Dorsolateral prefrontal cortex (tissue), 120 donors: ENCODE measurements at regions of chrX and their contacts with region 1.

Region 1: GRCh38 chrX:13966071-13966792 is 63.5 kb downstream of the GEMIN8 start:
- DNase-seq: no peak
- H3K4me3 ChIP-seq: peak overlapping the region in 4 of 59 donors; percentile 14 to 23 (median 16)
- H3K27ac ChIP-seq: peak overlapping the region in 58 of 59 donors; percentile 13 to 88 (median 78)
- H3K27me3 ChIP-seq: peaks cover 0 to 36% (median 4%) of the 10 kb centered on the region in 45 donors
- CTCF ChIP-seq: no peak

Region 2: DNA sequence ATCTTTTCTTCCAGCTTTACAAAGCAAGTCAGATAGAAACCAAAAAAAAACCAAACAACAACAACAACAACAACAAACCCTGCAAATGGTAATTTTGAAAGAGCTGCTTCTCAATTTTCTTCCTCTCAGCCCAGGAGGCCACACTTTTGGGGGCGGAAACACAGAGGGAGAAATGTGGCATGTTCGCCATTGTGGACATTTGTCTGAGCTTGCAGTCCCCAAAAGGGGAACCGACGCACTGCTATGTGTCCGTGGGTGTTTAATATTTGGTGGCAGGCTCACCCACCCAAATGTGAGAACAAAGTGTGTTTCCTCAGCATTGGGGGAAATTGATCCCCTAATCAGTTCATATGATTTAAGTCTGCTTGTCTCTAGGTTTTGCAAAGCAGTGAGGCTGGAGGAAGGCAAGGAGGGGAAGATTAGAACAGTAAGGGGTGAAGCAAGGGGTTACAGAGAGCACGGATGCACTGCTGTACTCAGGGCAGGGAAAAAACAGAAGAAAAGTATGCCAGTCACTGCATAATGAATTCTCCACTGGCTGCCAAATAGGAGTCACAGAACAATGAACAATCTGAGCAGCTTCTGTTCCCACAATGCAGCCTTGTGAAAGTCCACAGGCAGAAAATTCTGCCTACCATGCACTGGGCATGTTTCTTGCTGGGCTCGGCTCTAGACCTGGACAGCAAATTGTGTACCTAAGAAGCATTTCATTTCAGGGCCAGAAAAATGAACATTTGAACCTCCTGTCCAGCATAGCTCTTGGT is 74.7 kb before region 1 on chrX:
- intact Hi-C with region 1: loop called in 1 of 2 experiments (anchors 2 kb)
- DNase-seq: peak in 7 of 10 donors; percentile 47 to 74 (median 56)
- H3K4me3 ChIP-seq: peak overlapping the region in 31 of 59 donors; percentile 1 to 41 (median 16)
- H3K27ac ChIP-seq: peak overlapping the region; percentile 5 to 96 (median 86)
- H3K27me3 ChIP-seq: peaks cover 0 to 82% (median 16%) of the 10 kb centered on the region in 45 donors
- CTCF ChIP-seq: peak in 6 of 56 donors; percentile 13 to 34 (median 26)